Activated CD4-positive, alpha-beta memory T cell treated with anti-CD3 and anti-CD28 coated beads for 36 hours (primary cell): ENCODE measurements at regions of chr10 and their contacts with region 1.

Region 1: GRCh38 chr10:80498833-80499741 is 38.6 kb upstream of the SH2D4B start:
- DNase-seq: peak; percentile 88
- H3K4me3 Mint-ChIP-seq: peak overlapping the region; percentile 40
- H3K27ac Mint-ChIP-seq: peak overlapping the region; percentile 93
- H3K4me1 Mint-ChIP-seq: peaks cover 97% of the 10 kb centered on the region
- H3K27me3 Mint-ChIP-seq: no peaks in the 10 kb centered on the region

Region 2: DNA sequence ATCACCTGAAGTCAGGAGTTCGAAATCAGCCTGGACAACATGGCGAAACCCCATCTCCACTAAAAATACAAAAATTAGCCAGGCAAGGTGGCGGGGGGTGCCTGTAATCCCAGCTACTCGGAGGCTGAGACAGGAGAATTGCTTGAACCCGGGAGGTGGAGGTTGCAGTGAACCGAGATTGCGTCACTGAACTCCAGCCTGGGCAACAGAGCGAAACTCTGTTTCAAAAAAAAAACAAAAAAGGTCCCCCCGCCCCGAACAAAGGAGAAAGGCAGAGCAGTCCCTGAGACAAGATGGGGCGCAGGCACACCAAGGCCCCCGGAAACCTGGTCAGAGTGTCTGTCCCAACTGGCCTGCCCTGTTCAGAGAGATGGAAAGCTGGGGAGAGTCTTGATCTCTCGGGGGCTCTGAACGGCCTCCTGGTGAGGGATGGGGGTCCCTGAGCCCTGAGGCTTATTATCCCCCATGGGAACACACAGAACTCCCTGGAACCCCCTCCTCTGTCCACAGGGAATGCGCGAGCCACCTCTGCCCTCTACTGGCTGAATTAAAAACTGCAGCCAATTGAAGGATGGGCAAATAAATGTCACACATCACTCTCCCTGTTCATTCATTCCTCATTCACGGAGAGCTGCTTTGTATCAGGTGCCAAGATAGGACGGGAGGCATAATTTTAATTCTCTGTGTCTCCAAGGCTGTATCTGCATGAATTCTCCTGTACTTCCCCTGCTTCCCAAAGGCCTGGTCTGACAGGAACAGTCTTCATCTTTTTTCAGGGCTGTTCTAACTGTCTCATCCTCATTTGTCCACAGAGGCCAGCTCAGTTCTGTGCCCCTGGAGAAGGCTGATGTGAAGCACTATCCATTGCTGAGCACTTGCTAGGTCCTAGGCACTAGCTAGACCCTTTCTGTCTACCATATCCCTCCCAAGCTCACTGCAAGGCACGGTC is 238.5 kb before region 1 on chr10:
- CTCF ChIA-PET with region 1: no interaction called
- POLR2A ChIA-PET with region 1: no interaction called
- intact Hi-C with region 1: no loop called
- DNase-seq: peak; percentile 41
- H3K4me3 Mint-ChIP-seq: no peak overlapping the region
- H3K27ac Mint-ChIP-seq: no peak overlapping the region
- H3K4me1 Mint-ChIP-seq: no peaks in the 10 kb centered on the region
- H3K27me3 Mint-ChIP-seq: peaks cover 6% of the 10 kb centered on the region

Region 3: GRCh38 chr10:80453701-80454513 is 45.2 kb before region 1 on chr10 and contains the start of gene TSPAN14:
- CTCF ChIA-PET with region 1: interaction called, 1,168 read pairs
- POLR2A ChIA-PET with region 1: interaction called, 11 read pairs
- intact Hi-C with region 1: loop called (anchors 1 kb)
- DNase-seq: peak; percentile 81
- H3K4me3 Mint-ChIP-seq: peak within 1 kb of the TSS; percentile 91
- H3K27ac Mint-ChIP-seq: peak within 1 kb of the TSS; percentile 97
- H3K4me1 Mint-ChIP-seq: peaks cover 46% of the 10 kb centered on the region
- H3K27me3 Mint-ChIP-seq: no peaks in the 10 kb centered on the region
- total RNA-seq, gene TSPAN14: 48.9 to 51.8 TPM

Region 4: DNA sequence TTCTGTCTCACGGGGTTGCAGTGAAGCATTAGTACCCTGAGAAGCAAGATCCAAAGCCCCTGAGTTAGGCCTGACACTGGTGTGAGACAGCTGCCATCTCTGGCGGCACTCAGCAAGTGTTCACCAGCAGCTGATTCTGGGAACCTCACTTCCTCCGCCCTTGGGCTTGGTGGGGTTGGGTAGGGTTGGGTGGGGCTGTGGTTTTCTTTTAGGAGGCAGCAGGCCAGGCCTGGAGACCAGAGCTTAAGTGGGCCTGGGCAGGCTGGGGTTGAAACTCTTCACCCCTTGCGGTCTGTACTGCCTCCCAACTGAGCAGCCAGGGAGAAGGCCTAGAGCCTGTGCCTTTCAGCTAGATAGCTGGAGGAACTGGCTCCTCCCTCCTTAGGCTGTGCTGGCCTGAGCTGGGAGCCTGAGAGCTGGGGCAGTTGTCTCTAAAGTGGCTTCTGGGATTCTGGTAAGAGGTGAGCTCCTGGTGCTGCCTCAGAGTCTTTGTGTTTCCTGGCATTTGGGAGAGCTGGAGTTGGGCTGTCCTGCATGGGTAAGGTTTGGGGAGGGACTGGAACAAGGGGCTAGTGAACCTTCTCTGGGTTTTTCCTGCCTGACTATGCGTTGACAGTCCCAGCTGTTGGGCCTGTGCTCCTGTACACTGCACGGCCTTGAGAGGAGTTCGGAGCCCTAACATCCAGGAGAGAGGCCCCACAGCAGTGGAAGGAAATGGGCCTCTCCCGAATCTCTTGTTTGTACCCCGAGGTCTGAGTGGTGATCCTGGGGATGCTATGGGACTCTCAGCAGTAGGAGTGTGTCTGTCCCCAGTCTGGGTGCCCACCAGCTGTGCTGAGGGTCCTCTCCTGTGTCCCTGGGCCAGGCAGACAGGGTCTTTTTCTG is 39.8 kb before region 1 on chr10:
- CTCF ChIA-PET with region 1: interaction called, 1,168 read pairs
- POLR2A ChIA-PET with region 1: interaction called, 11 read pairs
- intact Hi-C with region 1: loop called (anchors 1 kb)
- DNase-seq: peak; percentile 85
- H3K4me3 Mint-ChIP-seq: peak overlapping the region; percentile 77
- H3K27ac Mint-ChIP-seq: peak overlapping the region; percentile 97
- H3K4me1 Mint-ChIP-seq: peaks cover 84% of the 10 kb centered on the region
- H3K27me3 Mint-ChIP-seq: no peaks in the 10 kb centered on the region

Region 5: DNA sequence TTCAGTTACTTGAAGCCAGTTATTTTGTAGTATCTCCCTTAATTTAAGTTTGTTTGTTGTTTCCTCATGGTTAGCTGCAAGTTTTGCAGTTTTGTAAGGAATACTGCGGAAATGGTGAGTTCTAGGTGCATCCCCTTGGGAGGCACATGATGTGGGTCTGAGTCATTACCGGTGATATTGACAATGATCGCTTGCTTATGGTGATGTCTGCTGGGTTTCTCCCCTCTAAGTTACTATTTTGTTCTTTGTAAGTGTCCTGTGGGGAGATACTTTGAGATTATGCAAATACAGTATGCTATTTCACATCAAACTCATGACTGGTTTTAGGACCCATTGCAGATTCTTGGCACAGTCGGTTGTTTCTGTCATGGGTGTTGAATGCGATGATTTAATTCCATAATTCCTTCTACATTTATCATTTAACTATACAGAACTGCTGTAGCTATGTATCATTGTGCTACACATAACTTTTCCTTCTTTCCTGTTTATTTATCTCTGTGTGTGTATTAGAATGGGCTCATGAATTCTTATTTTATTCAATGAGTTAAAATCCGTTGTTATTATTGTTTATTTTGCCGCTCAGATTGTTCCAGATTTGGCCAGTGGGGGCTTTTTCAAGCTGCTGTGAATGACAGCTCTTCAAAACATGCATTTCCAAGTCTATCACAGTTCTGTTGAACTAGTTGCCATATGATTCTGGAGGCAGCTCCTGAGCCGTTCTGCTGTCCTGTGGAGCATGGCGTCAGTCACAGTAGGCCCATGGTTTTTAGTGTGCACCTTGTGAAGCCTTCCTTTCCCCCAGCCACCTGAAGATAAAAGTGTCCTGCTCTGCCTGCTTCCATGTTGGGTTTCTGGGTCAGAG is 26.6 kb before region 1 on chr10:
- CTCF ChIA-PET with region 1: interaction called, 1,168 read pairs
- POLR2A ChIA-PET with region 1: interaction called, 5 read pairs
- intact Hi-C with region 1: loop called (anchors 1 kb)
- DNase-seq: peak; percentile 70
- H3K4me3 Mint-ChIP-seq: peak overlapping the region; percentile 27
- H3K27ac Mint-ChIP-seq: peak overlapping the region; percentile 99
- H3K4me1 Mint-ChIP-seq: peaks cover 88% of the 10 kb centered on the region
- H3K27me3 Mint-ChIP-seq: no peaks in the 10 kb centered on the region

Region 6: GRCh38 chr10:80509403-80510161 is 10.5 kb after region 1 on chr10:
- CTCF ChIA-PET with region 1: interaction called, 21 read pairs
- POLR2A ChIA-PET with region 1: interaction called, 5 read pairs
- intact Hi-C with region 1: no loop called
- DNase-seq: no peak
- H3K4me3 Mint-ChIP-seq: no peak overlapping the region
- H3K27ac Mint-ChIP-seq: peak overlapping the region; percentile 65
- H3K4me1 Mint-ChIP-seq: peaks cover 32% of the 10 kb centered on the region
- H3K27me3 Mint-ChIP-seq: no peaks in the 10 kb centered on the region

Region 7: GRCh38 chr10:80523773-80524172 is 24.7 kb after region 1 on chr10:
- CTCF ChIA-PET with region 1: no interaction called
- POLR2A ChIA-PET with region 1: no interaction called
- intact Hi-C with region 1: no loop called
- DNase-seq: no peak
- H3K4me3 Mint-ChIP-seq: no peak overlapping the region
- H3K27ac Mint-ChIP-seq: peak overlapping the region; percentile 58
- H3K4me1 Mint-ChIP-seq: peaks cover 52% of the 10 kb centered on the region
- H3K27me3 Mint-ChIP-seq: no peaks in the 10 kb centered on the region